ENCODE measurements at regions of chr10 and their contacts with region 1.

Region 1: GRCh38 chr10:31083765-31084184 is 52.1 kb upstream of the ZNF438 start:
- DNase-seq: peak; percentile 26 to 75 (median 33)
- ATAC-seq: peak; percentile 63
- H3K4me3 ChIP-seq: no peak overlapping the region
- H3K4me3 Mint-ChIP-seq: no peak overlapping the region
- H3K27ac ChIP-seq: no peak overlapping the region
- H3K27ac Mint-ChIP-seq: no peak overlapping the region
- H3K4me1 ChIP-seq: peaks cover 5% of the 10 kb centered on the region
- H3K4me1 Mint-ChIP-seq: peaks cover 4% of the 10 kb centered on the region
- H3K27me3 ChIP-seq: no peaks in the 10 kb centered on the region
- H3K27me3 Mint-ChIP-seq: no peaks in the 10 kb centered on the region
- CTCF ChIP-seq: peak; percentile 51

Region 2: DNA sequence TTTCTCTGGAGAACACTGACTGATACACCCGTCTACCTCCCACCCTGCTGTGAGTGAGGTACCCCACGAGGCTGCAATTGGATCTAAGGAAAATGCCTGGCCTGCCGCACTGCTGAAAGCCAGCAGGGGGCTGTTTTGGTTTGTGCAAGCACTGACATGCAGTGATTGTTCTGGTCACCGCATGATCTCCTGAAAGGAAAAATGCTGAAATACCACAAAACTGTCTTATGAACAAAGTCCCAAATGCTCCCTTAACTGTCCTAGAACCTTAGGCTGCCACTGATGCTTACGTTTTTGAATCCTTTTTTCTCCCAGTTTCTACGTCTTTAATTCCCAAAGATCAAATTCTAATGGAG is 1157.1 kb before region 1 on chr10:
- CTCF ChIA-PET with region 1: no interaction called
- POLR2A ChIA-PET with region 1: no interaction called
- intact Hi-C with region 1: no loop called
- DNase-seq: no peak
- ATAC-seq: no peak
- H3K4me3 ChIP-seq: no peak overlapping the region
- H3K4me3 Mint-ChIP-seq: no peak overlapping the region
- H3K27ac ChIP-seq: no peak overlapping the region
- H3K27ac Mint-ChIP-seq: no peak overlapping the region
- H3K4me1 ChIP-seq: no peaks in the 10 kb centered on the region
- H3K4me1 Mint-ChIP-seq: no peaks in the 10 kb centered on the region
- H3K27me3 ChIP-seq: no peaks in the 10 kb centered on the region
- H3K27me3 Mint-ChIP-seq: peaks cover 16% of the 10 kb centered on the region
- CTCF ChIP-seq: no peak

Region 3: DNA sequence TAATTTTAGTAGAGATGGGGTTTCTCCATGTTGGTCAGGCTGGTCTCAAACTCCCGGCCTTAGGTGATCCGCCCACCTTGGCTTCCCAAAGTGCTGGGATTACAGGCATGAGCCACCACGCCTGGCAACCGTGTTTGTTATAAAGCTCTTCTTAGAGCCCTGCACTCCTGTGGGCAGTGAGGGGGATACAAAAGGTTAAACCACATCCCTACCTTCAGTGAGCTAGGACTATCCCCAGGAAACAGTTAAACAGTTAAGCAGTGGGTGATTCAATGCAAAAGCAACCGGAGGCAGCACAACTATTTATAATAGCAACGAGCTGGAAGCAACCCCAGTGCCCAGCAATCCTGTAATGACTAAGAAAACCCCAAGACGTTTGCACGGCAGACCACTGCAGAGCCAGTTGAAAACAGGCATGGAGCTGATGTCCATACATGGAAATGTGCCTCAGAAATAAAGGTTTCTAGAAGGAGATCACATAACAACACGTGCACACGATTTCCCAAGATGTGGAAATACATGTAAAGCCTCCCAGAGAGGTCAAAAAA is 347.0 kb before region 1 on chr10:
- CTCF ChIA-PET with region 1: no interaction called
- POLR2A ChIA-PET with region 1: no interaction called
- intact Hi-C with region 1: no loop called
- DNase-seq: no peak
- ATAC-seq: no peak
- H3K4me3 ChIP-seq: no peak overlapping the region
- H3K4me3 Mint-ChIP-seq: no peak overlapping the region
- H3K27ac ChIP-seq: no peak overlapping the region
- H3K27ac Mint-ChIP-seq: no peak overlapping the region
- H3K4me1 ChIP-seq: peaks cover 5% of the 10 kb centered on the region
- H3K4me1 Mint-ChIP-seq: no peaks in the 10 kb centered on the region
- H3K27me3 ChIP-seq: no peaks in the 10 kb centered on the region
- H3K27me3 Mint-ChIP-seq: no peaks in the 10 kb centered on the region
- CTCF ChIP-seq: no peak

Region 4: DNA sequence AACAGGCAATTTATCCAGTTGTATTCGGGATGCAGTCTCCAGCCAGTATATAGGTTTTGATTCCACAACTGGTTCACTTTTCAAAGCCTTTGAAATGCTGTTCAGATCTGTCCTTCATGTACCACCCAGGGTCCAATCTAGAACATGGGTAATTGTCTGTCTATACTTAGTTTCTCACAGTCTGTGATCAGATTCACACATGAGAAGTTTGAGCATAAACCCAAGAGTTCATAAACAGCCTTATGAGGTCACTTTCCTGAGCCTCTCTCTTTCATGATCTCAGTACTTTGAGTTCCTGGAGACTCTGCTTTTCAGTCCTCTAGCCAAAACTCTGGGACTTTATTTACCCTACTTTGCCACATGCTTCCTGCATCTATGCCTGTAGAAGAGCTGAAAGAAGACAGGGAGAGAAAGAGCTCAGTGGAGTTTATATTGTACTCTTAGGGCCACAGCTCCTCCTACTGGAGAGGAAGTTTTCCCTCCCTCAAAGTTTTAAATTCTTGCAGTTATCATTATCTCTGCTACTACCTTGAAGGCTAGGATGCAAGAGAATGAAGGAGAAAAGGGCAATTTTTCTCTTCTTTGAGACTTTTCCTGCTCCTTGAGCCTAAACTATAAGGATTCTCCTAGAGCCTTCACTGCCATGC is 407.2 kb after region 1 on chr10:
- CTCF ChIA-PET with region 1: no interaction called
- POLR2A ChIA-PET with region 1: no interaction called
- intact Hi-C with region 1: loop called (anchors 1 to 10 kb)
- DNase-seq: peak in 4 of 14 experiments; percentile 16 to 59 (median 52)
- ATAC-seq: peak; percentile 49
- H3K4me3 ChIP-seq: no peak overlapping the region
- H3K4me3 Mint-ChIP-seq: no peak overlapping the region
- H3K27ac ChIP-seq: no peak overlapping the region
- H3K27ac Mint-ChIP-seq: no peak overlapping the region
- H3K4me1 ChIP-seq: no peaks in the 10 kb centered on the region
- H3K4me1 Mint-ChIP-seq: peaks cover 12% of the 10 kb centered on the region
- H3K27me3 ChIP-seq: no peaks in the 10 kb centered on the region
- H3K27me3 Mint-ChIP-seq: no peaks in the 10 kb centered on the region
- CTCF ChIP-seq: peak; percentile 52

Region 5: DNA sequence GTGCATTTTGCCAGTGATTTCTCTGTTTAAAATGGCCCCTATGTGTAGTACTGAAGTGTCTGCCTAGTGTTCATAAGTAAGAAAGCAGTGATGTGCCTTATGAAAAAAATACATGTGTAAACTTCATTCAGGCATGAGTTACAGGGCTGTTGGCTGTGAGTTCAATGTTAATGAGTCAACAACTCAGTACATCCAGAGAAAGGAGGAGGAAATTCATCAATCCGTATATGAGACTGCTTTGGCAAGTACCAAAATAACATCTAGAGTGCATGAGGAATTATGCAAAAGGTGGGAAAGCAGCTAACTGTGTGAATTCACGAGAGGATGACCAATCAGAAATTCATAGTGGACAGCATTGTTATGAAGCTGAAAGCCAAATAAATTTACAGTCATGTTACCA is 490.8 kb after region 1 on chr10:
- CTCF ChIA-PET with region 1: no interaction called
- POLR2A ChIA-PET with region 1: no interaction called
- intact Hi-C with region 1: no loop called
- DNase-seq: no peak
- ATAC-seq: no peak
- H3K4me3 ChIP-seq: no peak overlapping the region
- H3K4me3 Mint-ChIP-seq: no peak overlapping the region
- H3K27ac ChIP-seq: no peak overlapping the region
- H3K27ac Mint-ChIP-seq: no peak overlapping the region
- H3K4me1 ChIP-seq: peaks cover 5% of the 10 kb centered on the region
- H3K4me1 Mint-ChIP-seq: peaks cover 5% of the 10 kb centered on the region
- H3K27me3 ChIP-seq: peaks cover 0 to 2% of the 10 kb centered on the region in 2 experiments
- H3K27me3 Mint-ChIP-seq: no peaks in the 10 kb centered on the region
- CTCF ChIP-seq: no peak

Region 6: DNA sequence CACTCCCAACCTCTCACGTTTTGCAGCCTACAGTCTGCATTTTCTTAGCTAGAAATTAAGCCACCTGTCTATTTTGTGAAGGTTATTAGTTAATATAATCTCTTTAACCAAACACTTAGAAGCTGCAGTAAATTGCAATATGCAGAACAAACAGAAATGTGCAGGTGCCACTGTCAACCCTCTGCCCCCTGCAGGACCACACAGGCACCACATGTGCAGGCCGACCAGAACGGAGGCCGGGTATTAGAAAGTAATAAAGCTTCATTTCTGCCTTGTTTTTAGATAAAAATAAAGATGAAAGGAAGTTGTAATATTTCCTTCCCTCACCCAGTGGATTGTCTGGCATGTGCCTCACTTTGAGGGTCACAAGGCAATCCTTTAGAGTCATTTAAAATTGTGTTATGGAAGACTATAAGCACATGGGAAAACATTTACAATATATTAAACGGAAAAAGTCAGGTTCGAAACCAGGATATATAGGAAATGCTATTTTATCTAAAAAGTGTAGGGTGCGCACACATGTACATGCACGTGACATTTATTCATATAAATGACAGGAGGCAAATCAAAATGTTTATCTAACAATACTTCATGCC is 686.6 kb after region 1 on chr10:
- CTCF ChIA-PET with region 1: no interaction called
- POLR2A ChIA-PET with region 1: no interaction called
- intact Hi-C with region 1: loop called (anchors 1 to 5 kb)
- DNase-seq: peak; percentile 43 to 76 (median 54)
- ATAC-seq: peak; percentile 97
- H3K4me3 ChIP-seq: no peak overlapping the region
- H3K4me3 Mint-ChIP-seq: no peak overlapping the region
- H3K27ac ChIP-seq: no peak overlapping the region
- H3K27ac Mint-ChIP-seq: no peak overlapping the region
- H3K4me1 ChIP-seq: no peaks in the 10 kb centered on the region
- H3K4me1 Mint-ChIP-seq: no peaks in the 10 kb centered on the region
- H3K27me3 ChIP-seq: no peaks in the 10 kb centered on the region
- H3K27me3 Mint-ChIP-seq: no peaks in the 10 kb centered on the region
- CTCF ChIP-seq: peak; percentile 89

Region 7: DNA sequence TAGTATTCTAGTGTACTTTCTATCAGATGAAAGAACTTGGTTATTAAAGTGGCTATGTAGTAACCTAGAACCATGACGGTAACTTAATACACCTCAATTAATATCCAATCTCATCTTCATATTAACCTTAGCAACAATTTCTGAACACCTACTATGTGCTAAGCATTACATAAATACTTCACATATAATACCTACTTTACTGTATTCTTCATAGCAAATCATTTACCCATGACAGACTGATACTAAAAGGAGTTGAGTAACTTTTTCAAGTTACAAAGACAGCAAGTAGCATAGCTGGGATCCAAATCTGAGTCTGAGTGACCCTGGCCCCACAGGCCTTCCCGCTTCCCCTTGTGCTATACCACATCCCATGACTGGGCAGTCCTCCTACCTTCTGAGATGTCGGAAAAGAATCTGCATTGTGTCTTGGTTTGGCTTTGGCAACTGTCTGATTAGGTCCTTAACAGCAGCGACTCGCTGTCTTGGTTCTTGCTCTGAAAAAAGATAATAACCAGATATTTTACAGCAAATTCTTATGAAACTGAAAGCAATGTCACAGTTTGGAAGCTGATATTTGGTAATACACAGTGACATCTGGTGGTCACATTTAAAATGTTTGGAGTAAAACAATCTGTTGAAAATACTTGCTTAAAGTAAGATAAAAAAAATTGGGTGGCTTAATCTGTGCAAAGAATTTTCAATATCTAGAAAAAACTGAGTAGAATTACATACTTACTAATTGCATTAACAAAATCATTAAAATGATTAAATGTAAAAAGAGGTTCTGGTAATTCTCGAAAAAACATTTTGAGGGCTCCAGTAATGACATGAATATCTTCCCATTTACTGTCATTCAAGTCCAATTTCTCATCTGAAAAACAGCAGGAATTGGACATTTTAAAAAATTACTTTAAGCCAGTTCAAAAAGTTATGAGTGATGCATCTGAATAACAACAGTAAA is 724.8 kb after region 1 on chr10:
- CTCF ChIA-PET with region 1: interaction called, 3 read pairs
- POLR2A ChIA-PET with region 1: interaction called, 5 read pairs
- intact Hi-C with region 1: loop called in 1 of 2 experiments (anchors 5 kb)
- DNase-seq: peak in 4 of 14 experiments; percentile 3 to 75 (median 70)
- ATAC-seq: peak; percentile 68
- H3K4me3 ChIP-seq: no peak overlapping the region
- H3K4me3 Mint-ChIP-seq: no peak overlapping the region
- H3K27ac ChIP-seq: no peak overlapping the region
- H3K27ac Mint-ChIP-seq: peak overlapping the region; percentile 50
- H3K4me1 ChIP-seq: peaks cover 3% of the 10 kb centered on the region
- H3K4me1 Mint-ChIP-seq: peaks cover 14% of the 10 kb centered on the region
- H3K27me3 ChIP-seq: no peaks in the 10 kb centered on the region
- H3K27me3 Mint-ChIP-seq: no peaks in the 10 kb centered on the region
- CTCF ChIP-seq: peak; percentile 73